H1 (cell line): ENCODE measurements at regions of chr3 and their contacts with region 1.

Region 1: GRCh38 chr3:138915503-138916498 is 31.1 kb downstream of the FOXL2 start:
- DNase-seq: peak in 1 of 2 experiments; percentile 98
- H3K4me3 ChIP-seq: peak overlapping the region; percentile 44 to 89 (median 86)
- H3K27ac ChIP-seq: peak overlapping the region; percentile 65
- H3K4me1 ChIP-seq: peaks cover 0 to 4% (median under 1%) of the 10 kb centered on the region in 4 experiments; a peak in 2 of 7 replicates
- H3K27me3 ChIP-seq: no peaks in the 10 kb centered on the region
- CTCF ChIP-seq: peak; percentile 77 to 97 (median 80)
- EP300 ChIP-seq: peak in 1 of 2 experiments; percentile 50; a peak in 1 of 3 replicates
- POLR2A ChIP-seq: peak in 1 of 2 experiments; percentile 57; a peak in 1 of 3 replicates
- RAD21 ChIP-seq: peak; percentile 75 to 85

Region 2: GRCh38 chr3:138678086-138678485 is 237.7 kb before region 1 on chr3:
- CTCF ChIA-PET with region 1: interaction called, 15 read pairs
- POLR2A ChIA-PET with region 1: no interaction called
- DNase-seq: no peak
- H3K4me3 ChIP-seq: no peak overlapping the region
- H3K27ac ChIP-seq: no peak overlapping the region
- H3K4me1 ChIP-seq: peaks cover 0 to 3% (median 0%) of the 10 kb centered on the region in 4 experiments; a peak in 1 of 7 replicates
- H3K27me3 ChIP-seq: no peaks in the 10 kb centered on the region
- CTCF ChIP-seq: no peak
- EP300 ChIP-seq: no peak
- POLR2A ChIP-seq: no peak
- RAD21 ChIP-seq: no peak

Region 3: GRCh38 chr3:138717348-138717747 is 198.5 kb before region 1 on chr3:
- CTCF ChIA-PET with region 1: interaction called, 17 read pairs
- POLR2A ChIA-PET with region 1: interaction called, 5 read pairs
- DNase-seq: no peak
- H3K4me3 ChIP-seq: no peak overlapping the region
- H3K27ac ChIP-seq: no peak overlapping the region
- H3K4me1 ChIP-seq: no peaks in the 10 kb centered on the region
- H3K27me3 ChIP-seq: no peaks in the 10 kb centered on the region
- CTCF ChIP-seq: no peak
- EP300 ChIP-seq: no peak
- POLR2A ChIP-seq: no peak
- RAD21 ChIP-seq: no peak

Region 4: GRCh38 chr3:138809500-138810256 is 106.1 kb before region 1 on chr3:
- CTCF ChIA-PET with region 1: interaction called, 16 read pairs
- POLR2A ChIA-PET with region 1: no interaction called
- DNase-seq: no peak
- H3K4me3 ChIP-seq: no peak overlapping the region
- H3K27ac ChIP-seq: no peak overlapping the region
- H3K4me1 ChIP-seq: no peaks in the 10 kb centered on the region
- H3K27me3 ChIP-seq: no peaks in the 10 kb centered on the region
- CTCF ChIP-seq: no peak
- EP300 ChIP-seq: no peak
- POLR2A ChIP-seq: no peak
- RAD21 ChIP-seq: no peak

Region 5: GRCh38 chr3:138842483-138843188 is 73.2 kb before region 1 on chr3:
- CTCF ChIA-PET with region 1: interaction called, 21 read pairs
- POLR2A ChIA-PET with region 1: interaction called, 12 read pairs
- DNase-seq: no peak
- H3K4me3 ChIP-seq: no peak overlapping the region
- H3K27ac ChIP-seq: no peak overlapping the region
- H3K4me1 ChIP-seq: peaks cover 7 to 21% (median 12%) of the 10 kb centered on the region in 4 experiments; a peak in 6 of 7 replicates
- H3K27me3 ChIP-seq: no peaks in the 10 kb centered on the region
- CTCF ChIP-seq: no peak
- EP300 ChIP-seq: no peak
- POLR2A ChIP-seq: no peak
- RAD21 ChIP-seq: no peak

Region 6: GRCh38 chr3:138898301-138898700 is 17.5 kb before region 1 on chr3:
- CTCF ChIA-PET with region 1: interaction called, 22 read pairs
- POLR2A ChIA-PET with region 1: interaction called, 3 read pairs
- DNase-seq: no peak
- H3K4me3 ChIP-seq: no peak overlapping the region
- H3K27ac ChIP-seq: no peak overlapping the region
- H3K4me1 ChIP-seq: no peaks in the 10 kb centered on the region; a peak in 1 of 7 replicates
- H3K27me3 ChIP-seq: no peaks in the 10 kb centered on the region
- CTCF ChIP-seq: no peak
- EP300 ChIP-seq: no peak
- POLR2A ChIP-seq: no peak
- RAD21 ChIP-seq: no peak

Region 7: DNA sequence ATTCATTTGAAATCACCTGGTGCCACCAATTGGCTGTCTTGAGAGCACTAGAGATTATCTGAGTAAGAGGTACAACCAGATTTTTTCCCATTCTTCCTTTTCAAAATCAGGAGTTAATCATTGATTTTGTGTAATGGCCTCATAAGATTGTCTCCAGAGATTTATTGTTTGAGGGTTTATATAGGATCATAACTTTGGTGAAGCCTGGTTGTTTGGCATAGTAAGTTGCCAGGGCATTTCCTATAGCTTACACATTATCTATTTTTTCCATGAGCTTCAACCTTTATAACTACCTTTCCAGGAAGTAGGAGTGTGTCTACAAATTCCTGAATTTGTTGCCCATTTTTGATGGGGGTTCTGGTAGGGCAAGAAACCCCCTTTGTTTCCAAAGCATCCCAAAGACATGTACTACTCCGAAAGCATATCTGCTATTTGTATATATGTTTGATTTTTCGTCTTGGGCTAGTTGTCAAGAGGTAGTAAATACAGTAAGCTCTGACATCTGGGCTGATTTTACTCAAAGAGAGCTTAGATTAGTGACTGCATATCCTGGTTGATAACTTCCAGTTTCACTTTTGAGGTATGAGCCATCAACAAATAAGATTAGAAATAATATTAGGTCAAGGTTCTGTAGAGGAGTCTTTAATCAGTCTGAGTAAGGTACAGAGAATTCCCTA is 116.7 kb after region 1 on chr3:
- CTCF ChIA-PET with region 1: no interaction called
- POLR2A ChIA-PET with region 1: no interaction called
- DNase-seq: no peak
- H3K4me3 ChIP-seq: no peak overlapping the region
- H3K27ac ChIP-seq: no peak overlapping the region
- H3K4me1 ChIP-seq: no peaks in the 10 kb centered on the region
- H3K27me3 ChIP-seq: no peaks in the 10 kb centered on the region
- CTCF ChIP-seq: no peak
- EP300 ChIP-seq: no peak
- POLR2A ChIP-seq: no peak
- RAD21 ChIP-seq: no peak